Activated CD4-positive, alpha-beta T cell treated with anti-CD3 and anti-CD28 coated beads, Interleukin-2, amount 10 ng/mL, durations not matched to agents 24 days and 14 days (primary cell): ENCODE measurements at regions of chr11 and their contacts with region 1.

Region 1: GRCh38 chr11:4072668-4073285 is 21.8 kb upstream of the RRM1 start:
- DNase-seq: peak; percentile 88
- H3K4me3 Mint-ChIP-seq: no peak overlapping the region
- H3K27ac Mint-ChIP-seq: peak overlapping the region; percentile 5
- H3K4me1 Mint-ChIP-seq: peaks cover 44% of the 10 kb centered on the region
- H3K27me3 Mint-ChIP-seq: no peaks in the 10 kb centered on the region

Region 2: DNA sequence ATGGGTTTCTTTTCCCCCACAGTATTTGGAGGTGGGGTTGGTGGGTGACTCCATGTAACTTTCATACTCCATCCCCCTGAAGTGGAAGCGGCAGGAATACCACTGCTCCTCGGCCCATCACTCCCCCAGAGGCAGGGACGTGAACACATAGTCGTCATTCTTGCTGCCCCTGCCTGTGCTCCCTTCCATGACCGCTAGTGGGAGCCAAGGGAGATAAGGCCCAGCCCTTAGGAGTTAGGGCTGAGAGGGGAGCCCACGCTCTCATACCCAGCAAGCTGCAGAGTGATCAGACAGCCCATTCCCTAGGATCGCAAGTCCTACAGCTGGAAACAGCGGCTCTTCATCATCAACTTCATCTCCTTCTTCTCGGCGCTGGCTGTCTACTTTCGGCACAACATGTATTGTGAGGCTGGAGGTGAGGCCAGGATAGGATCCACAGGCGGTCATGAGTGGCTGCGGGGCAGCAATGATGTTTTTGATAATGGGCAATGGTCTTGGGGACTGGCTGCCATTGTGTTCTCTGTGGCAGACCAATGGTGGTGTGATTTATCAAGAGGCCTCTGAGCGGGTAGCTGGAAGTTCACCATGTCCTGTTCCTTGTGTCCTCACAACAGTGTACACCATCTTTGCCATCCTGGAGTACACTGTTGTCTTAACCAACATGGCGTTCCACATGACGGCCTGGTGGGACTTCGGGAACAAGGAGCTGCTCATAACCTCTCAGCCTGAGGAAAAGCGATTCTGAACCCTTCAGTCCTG is 247.9 kb before region 1 on chr11:
- intact Hi-C with region 1: loop called (anchors 1 kb)
- DNase-seq: peak; percentile 94
- H3K4me3 Mint-ChIP-seq: no peak overlapping the region
- H3K27ac Mint-ChIP-seq: peak overlapping the region; percentile 71
- H3K4me1 Mint-ChIP-seq: peaks cover 27% of the 10 kb centered on the region
- H3K27me3 Mint-ChIP-seq: no peaks in the 10 kb centered on the region

Region 3: DNA sequence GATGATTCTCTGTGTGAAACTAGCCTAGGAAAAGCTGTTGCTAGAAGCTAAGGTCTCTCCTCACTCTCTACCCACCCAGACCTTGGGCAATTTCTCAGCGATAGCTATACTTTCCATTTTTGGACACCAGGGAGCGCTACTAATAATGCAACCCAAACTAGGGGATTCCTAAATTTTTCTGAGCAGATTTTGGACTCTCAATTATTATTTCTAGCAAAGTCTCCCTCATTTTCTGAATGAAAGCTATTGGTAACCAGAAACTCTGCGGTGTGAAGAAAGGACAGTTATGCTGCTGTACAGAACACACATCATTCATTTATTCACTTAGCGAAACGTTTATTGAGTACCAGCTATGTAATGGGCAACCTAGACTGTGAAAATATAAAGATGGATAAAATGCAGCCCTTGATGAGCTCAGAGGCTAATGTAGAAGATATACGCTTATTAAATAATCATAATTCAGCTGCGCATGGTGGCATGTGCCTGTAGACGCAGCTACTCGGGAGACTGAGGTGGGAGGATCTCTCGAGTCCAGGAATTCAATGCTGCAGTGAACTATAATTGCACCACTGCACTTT is 223.4 kb before region 1 on chr11:
- intact Hi-C with region 1: loop called (anchors 1 kb)
- DNase-seq: peak; percentile 89
- H3K4me3 Mint-ChIP-seq: no peak overlapping the region
- H3K27ac Mint-ChIP-seq: no peak overlapping the region
- H3K4me1 Mint-ChIP-seq: peaks cover 39% of the 10 kb centered on the region
- H3K27me3 Mint-ChIP-seq: no peaks in the 10 kb centered on the region

Region 4: GRCh38 chr11:3984896-3985295 is 87.9 kb before region 1 on chr11:
- intact Hi-C with region 1: loop called (anchors 5 kb)
- DNase-seq: peak; percentile 79
- H3K4me3 Mint-ChIP-seq: no peak overlapping the region
- H3K27ac Mint-ChIP-seq: peak overlapping the region; percentile 61
- H3K4me1 Mint-ChIP-seq: peaks cover 61% of the 10 kb centered on the region
- H3K27me3 Mint-ChIP-seq: no peaks in the 10 kb centered on the region

Region 5: GRCh38 chr11:4118107-4118506 is 45.3 kb after region 1 on chr11:
- intact Hi-C with region 1: no loop called
- DNase-seq: no peak
- H3K4me3 Mint-ChIP-seq: no peak overlapping the region
- H3K27ac Mint-ChIP-seq: peak overlapping the region; percentile 82
- H3K4me1 Mint-ChIP-seq: peaks cover 15% of the 10 kb centered on the region
- H3K27me3 Mint-ChIP-seq: no peaks in the 10 kb centered on the region

Region 6: GRCh38 chr11:4146070-4146771 is 73.4 kb after region 1 on chr11:
- intact Hi-C with region 1: no loop called
- DNase-seq: no peak
- H3K4me3 Mint-ChIP-seq: no peak overlapping the region
- H3K27ac Mint-ChIP-seq: no peak overlapping the region
- H3K4me1 Mint-ChIP-seq: no peaks in the 10 kb centered on the region
- H3K27me3 Mint-ChIP-seq: no peaks in the 10 kb centered on the region

Region 7: DNA sequence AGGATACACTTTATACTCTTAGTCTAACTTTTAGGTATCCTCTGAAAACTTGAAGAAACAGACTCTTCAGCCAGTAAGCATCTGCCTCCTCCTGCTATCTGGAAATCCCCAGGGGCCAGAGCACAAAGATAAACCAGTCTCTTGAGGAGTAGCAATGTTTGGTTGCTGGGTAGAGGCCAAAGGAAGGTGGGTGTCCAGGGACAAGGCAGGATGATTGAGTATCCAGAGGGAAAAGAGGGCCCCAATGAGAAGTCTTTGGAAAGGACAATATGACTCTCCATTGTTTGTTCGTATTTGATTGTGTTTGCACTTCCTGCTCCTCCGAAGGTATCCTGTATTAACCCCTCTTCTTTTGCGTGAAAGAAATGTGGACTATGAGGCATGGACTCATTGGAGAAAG is 516.2 kb after region 1 on chr11:
- intact Hi-C with region 1: no loop called
- DNase-seq: no peak
- H3K4me3 Mint-ChIP-seq: no peak overlapping the region
- H3K27ac Mint-ChIP-seq: no peak overlapping the region
- H3K4me1 Mint-ChIP-seq: no peaks in the 10 kb centered on the region
- H3K27me3 Mint-ChIP-seq: peaks cover 5% of the 10 kb centered on the region